IMR-90 (cell line): ENCODE measurements at regions of chr12 and their contacts with region 1.

Region 1: GRCh38 chr12:4210183-4210582 is 63.4 kb upstream of the CCND2 start:
- DNase-seq: no peak
- ATAC-seq: no peak
- H3K4me3 ChIP-seq: no peak overlapping the region
- H3K27ac ChIP-seq: no peak overlapping the region
- H3K4me1 ChIP-seq: no peaks in the 10 kb centered on the region
- H3K27me3 ChIP-seq: no peaks in the 10 kb centered on the region; the same call in 1 of the 2 replicates
- CTCF ChIP-seq: no peak
- POLR2A ChIP-seq: no peak
- RAD21 ChIP-seq: no peak

Region 2: GRCh38 chr12:4251216-4251891 is 41.2 kb after region 1 on chr12:
- CTCF ChIA-PET with region 1: no interaction called
- POLR2A ChIA-PET with region 1: no interaction called
- dilution Hi-C with region 1: no loop called
- in situ Hi-C with region 1: no loop called
- intact Hi-C with region 1: loop called (anchors 1 kb)
- DNase-seq: no peak
- ATAC-seq: no peak
- H3K4me3 ChIP-seq: no peak overlapping the region
- H3K27ac ChIP-seq: no peak overlapping the region
- H3K4me1 ChIP-seq: no peaks in the 10 kb centered on the region
- H3K27me3 ChIP-seq: peaks cover 8% of the 10 kb centered on the region; the same call in 1 of the 2 replicates
- CTCF ChIP-seq: no peak
- POLR2A ChIP-seq: no peak
- RAD21 ChIP-seq: no peak